CD4-positive, alpha-beta T cell (primary cell): ENCODE measurements at regions of chr12 and their contacts with region 1.

Region 1: DNA sequence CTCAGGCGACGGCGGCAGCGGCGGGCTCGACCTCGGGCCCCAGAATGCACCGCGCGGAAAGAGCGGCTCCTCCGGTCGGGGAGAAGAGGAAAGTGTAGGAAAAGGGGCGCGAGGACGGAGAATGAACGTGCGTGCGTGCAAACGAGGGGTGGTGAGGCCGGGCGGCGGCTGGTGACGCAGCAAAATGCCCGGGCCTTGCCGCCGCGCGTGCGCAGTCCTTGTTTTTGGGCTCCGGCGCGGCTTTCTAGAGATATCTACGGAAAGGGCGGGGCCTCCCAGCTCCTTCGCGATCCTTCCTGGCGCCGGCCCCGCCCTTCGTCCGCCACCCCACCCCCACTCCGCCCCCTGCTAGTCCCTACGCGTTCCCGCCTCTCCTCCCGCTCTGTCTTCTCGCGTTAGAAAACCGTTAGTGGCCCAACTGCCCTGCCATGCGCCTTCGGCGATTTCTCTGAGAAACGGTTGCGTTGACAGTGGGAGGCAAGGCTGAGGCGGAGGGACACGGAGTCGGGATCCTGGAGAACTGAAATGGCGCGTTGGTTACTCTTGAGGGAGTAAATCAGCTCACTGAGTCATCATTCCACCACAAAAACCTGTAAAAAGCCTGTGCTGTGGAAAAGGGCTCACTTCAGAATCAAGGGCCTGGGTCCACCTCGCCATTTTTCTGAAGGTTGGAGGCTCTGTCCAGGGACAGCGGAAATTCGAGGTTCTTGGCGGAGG is at the start of gene PTGES3:
- DNase-seq: peak; percentile 93 to 100 (median 97)
- ATAC-seq: peak; percentile 73
- H3K4me3 ChIP-seq: peak within 1 kb of the TSS; percentile 96
- H3K4me3 Mint-ChIP-seq: peak within 1 kb of the TSS; percentile 100
- H3K27ac ChIP-seq: peak within 1 kb of the TSS; percentile 98 to 99
- H3K27ac Mint-ChIP-seq: peak within 1 kb of the TSS; percentile 96
- H3K4me1 ChIP-seq: peaks cover 39% of the 10 kb centered on the region
- H3K4me1 Mint-ChIP-seq: peaks cover 43% of the 10 kb centered on the region
- H3K27me3 ChIP-seq: no peaks in the 10 kb centered on the region
- H3K27me3 Mint-ChIP-seq: no peaks in the 10 kb centered on the region
- CTCF ChIP-seq: no peak
- total RNA-seq, gene PTGES3: 146 to 154 TPM

Region 2: GRCh38 chr12:56645717-56646446 is 42.4 kb before region 1 on chr12 and contains the start of gene ATP5F1B:
- CTCF ChIA-PET with region 1: interaction called, 4 read pairs
- POLR2A ChIA-PET with region 1: interaction called, 139 read pairs
- intact Hi-C with region 1: loop called (anchors 1 to 2 kb)
- DNase-seq: peak; percentile 74 to 99 (median 84)
- ATAC-seq: peak; percentile 95
- H3K4me3 ChIP-seq: peak within 1 kb of the TSS; percentile 83
- H3K4me3 Mint-ChIP-seq: peak within 1 kb of the TSS; percentile 85
- H3K27ac ChIP-seq: peak within 1 kb of the TSS; percentile 86 to 91
- H3K27ac Mint-ChIP-seq: peak within 1 kb of the TSS; percentile 88
- H3K4me1 ChIP-seq: peaks cover 36% of the 10 kb centered on the region
- H3K4me1 Mint-ChIP-seq: peaks cover 34% of the 10 kb centered on the region
- H3K27me3 ChIP-seq: no peaks in the 10 kb centered on the region
- H3K27me3 Mint-ChIP-seq: no peaks in the 10 kb centered on the region
- CTCF ChIP-seq: no peak
- total RNA-seq, gene ATP5F1B: 305 to 318 TPM

Region 3: GRCh38 chr12:56670836-56671235 is 17.5 kb before region 1 on chr12:
- CTCF ChIA-PET with region 1: interaction called, 5 read pairs
- POLR2A ChIA-PET with region 1: interaction called, 64 read pairs
- intact Hi-C with region 1: loop called in 1 of 2 experiments (anchors 2 kb)
- DNase-seq: no peak
- ATAC-seq: no peak
- H3K4me3 ChIP-seq: no peak overlapping the region
- H3K4me3 Mint-ChIP-seq: no peak overlapping the region
- H3K27ac ChIP-seq: no peak overlapping the region
- H3K27ac Mint-ChIP-seq: no peak overlapping the region
- H3K4me1 ChIP-seq: peaks cover 21% of the 10 kb centered on the region
- H3K4me1 Mint-ChIP-seq: peaks cover 33% of the 10 kb centered on the region
- H3K27me3 ChIP-seq: no peaks in the 10 kb centered on the region
- H3K27me3 Mint-ChIP-seq: no peaks in the 10 kb centered on the region
- CTCF ChIP-seq: no peak

Region 4: DNA sequence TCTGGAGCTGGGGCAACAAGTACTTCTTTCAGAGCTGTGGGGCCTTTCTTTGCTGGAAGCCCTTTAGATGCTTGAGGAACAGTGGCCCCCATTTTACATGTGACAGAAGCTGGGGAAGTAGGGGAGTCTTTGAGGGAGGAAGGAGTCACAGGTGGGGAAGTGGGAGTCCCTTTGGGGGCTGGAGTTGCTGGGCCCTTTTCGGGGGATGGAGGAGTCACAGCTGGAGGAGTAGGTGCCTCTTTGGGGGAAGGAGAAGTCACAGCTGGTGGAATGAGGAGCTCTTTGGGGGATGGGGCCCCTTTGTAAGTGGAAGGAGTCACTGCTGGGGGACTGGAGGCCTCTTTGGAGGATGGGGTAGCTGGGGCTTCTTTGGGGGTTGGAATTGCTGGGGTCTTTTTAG is 28.2 kb after region 1 on chr12:
- CTCF ChIA-PET with region 1: no interaction called
- POLR2A ChIA-PET with region 1: interaction called, 26 read pairs
- intact Hi-C with region 1: no loop called
- DNase-seq: no peak
- ATAC-seq: no peak
- H3K4me3 ChIP-seq: no peak overlapping the region
- H3K4me3 Mint-ChIP-seq: no peak overlapping the region
- H3K27ac ChIP-seq: peak overlapping the region in 1 of 2 donors; percentile 29
- H3K27ac Mint-ChIP-seq: peak overlapping the region; percentile 74
- H3K4me1 ChIP-seq: peaks cover 53% of the 10 kb centered on the region
- H3K4me1 Mint-ChIP-seq: peaks cover 55% of the 10 kb centered on the region
- H3K27me3 ChIP-seq: no peaks in the 10 kb centered on the region
- H3K27me3 Mint-ChIP-seq: no peaks in the 10 kb centered on the region
- CTCF ChIP-seq: no peak

Region 5: DNA sequence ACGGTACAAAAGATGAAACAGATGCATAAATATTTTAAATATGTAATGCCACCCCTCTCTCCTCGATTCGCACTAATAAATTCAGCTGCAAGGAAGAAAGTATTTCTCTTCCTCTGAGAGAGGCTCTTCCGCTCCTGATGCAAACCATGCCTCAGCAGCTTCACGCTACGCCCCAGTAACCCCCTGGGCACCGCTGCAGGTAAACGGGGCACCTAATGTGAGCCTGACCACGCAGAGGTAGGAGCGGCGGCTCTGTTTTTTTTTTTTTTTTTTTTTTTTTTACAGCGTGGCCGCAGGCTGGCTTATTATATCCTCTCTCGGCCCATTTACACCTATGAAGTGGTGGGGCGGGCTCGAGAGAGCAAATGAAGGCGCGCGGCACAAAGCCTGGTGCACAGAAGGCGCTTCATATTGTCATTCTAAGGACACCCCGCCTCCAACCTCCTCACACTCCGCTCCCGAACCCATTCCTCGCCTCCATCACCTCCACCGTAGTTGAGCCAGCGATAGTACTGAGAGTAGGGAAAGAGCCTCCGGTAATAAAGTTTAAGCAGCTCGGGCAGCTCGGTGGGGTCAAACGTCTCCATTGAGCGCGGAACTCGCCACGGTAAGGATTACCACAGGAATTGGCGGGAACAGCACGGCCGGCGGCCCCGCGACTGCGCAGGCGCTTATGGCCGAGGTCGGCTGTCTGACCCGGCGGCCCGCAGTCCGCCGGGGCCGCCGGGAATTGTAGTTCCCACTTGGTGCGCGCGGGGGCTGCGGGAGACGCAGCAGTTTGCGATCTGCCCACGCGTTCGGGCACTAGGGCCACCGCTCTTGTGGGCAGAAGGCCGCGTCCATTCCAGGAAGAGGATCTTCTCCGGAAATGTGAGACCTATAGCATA is 63.7 kb after region 1 on chr12 and contains the start of gene PRIM1:
- CTCF ChIA-PET with region 1: interaction called, 4 read pairs
- POLR2A ChIA-PET with region 1: interaction called, 10 read pairs
- intact Hi-C with region 1: loop called in 1 of 2 experiments (anchors 2 kb)
- DNase-seq: peak; percentile 66 to 91 (median 78)
- ATAC-seq: peak; percentile 80
- H3K4me3 ChIP-seq: peak within 1 kb of the TSS; percentile 96
- H3K4me3 Mint-ChIP-seq: peak within 1 kb of the TSS; percentile 98
- H3K27ac ChIP-seq: peak within 1 kb of the TSS; percentile 68 to 80
- H3K27ac Mint-ChIP-seq: peak within 1 kb of the TSS; percentile 95
- H3K4me1 ChIP-seq: peaks cover 10% of the 10 kb centered on the region
- H3K4me1 Mint-ChIP-seq: peaks cover 33% of the 10 kb centered on the region
- H3K27me3 ChIP-seq: no peaks in the 10 kb centered on the region
- H3K27me3 Mint-ChIP-seq: no peaks in the 10 kb centered on the region
- CTCF ChIP-seq: peak; percentile 41
- total RNA-seq, gene PRIM1: 5.3 to 6.1 TPM